CD8-positive, alpha-beta memory T cell (primary cell): ENCODE measurements at regions of chr19 and their contacts with region 1.

Region 1: GRCh38 chr19:4851551-4852290 is 15.7 kb downstream of the PLIN3 start:
- DNase-seq: peak; percentile 60 to 82 (median 68)
- H3K4me3 ChIP-seq: no peak overlapping the region
- H3K4me3 Mint-ChIP-seq: no peak overlapping the region
- H3K27ac ChIP-seq: no peak overlapping the region
- H3K27ac Mint-ChIP-seq: peak overlapping the region in 1 of 8 donors; percentile 19
- H3K4me1 ChIP-seq: no peaks in the 10 kb centered on the region
- H3K4me1 Mint-ChIP-seq: peaks cover 2 to 4% (median 3%) of the 10 kb centered on the region in 3 donors
- H3K27me3 ChIP-seq: no peaks in the 10 kb centered on the region
- H3K27me3 Mint-ChIP-seq: no peaks in the 10 kb centered on the region

Region 2: GRCh38 chr19:4732680-4733114 is 119.0 kb before region 1 on chr19:
- CTCF ChIA-PET with region 1: no interaction called
- POLR2A ChIA-PET with region 1: no interaction called
- DNase-seq: peak; percentile 26 to 72 (median 54)
- H3K4me3 ChIP-seq: peak overlapping the region; percentile 23
- H3K4me3 Mint-ChIP-seq: peak overlapping the region in 6 of 7 donors; percentile 4 to 54 (median 32)
- H3K27ac ChIP-seq: no peak overlapping the region
- H3K27ac Mint-ChIP-seq: peak overlapping the region in 5 of 8 donors; percentile 5 to 95 (median 24)
- H3K4me1 ChIP-seq: peaks cover 4% of the 10 kb centered on the region
- H3K4me1 Mint-ChIP-seq: peaks cover 4 to 7% (median 5%) of the 10 kb centered on the region in 3 donors
- H3K27me3 ChIP-seq: peaks cover 3% of the 10 kb centered on the region
- H3K27me3 Mint-ChIP-seq: peaks cover 6 to 10% of the 10 kb centered on the region in 2 donors

Region 3: GRCh38 chr19:4803736-4804695 is 47.7 kb before region 1 on chr19:
- CTCF ChIA-PET with region 1: interaction called, 205 read pairs
- POLR2A ChIA-PET with region 1: interaction called, 3 read pairs
- DNase-seq: peak; percentile 40 to 72 (median 53)
- H3K4me3 ChIP-seq: no peak overlapping the region
- H3K4me3 Mint-ChIP-seq: no peak overlapping the region
- H3K27ac ChIP-seq: no peak overlapping the region
- H3K27ac Mint-ChIP-seq: peak overlapping the region in 1 of 8 donors; percentile 21
- H3K4me1 ChIP-seq: no peaks in the 10 kb centered on the region
- H3K4me1 Mint-ChIP-seq: peaks cover 0 to 3% (median 0%) of the 10 kb centered on the region in 3 donors
- H3K27me3 ChIP-seq: no peaks in the 10 kb centered on the region
- H3K27me3 Mint-ChIP-seq: no peaks in the 10 kb centered on the region

Region 4: DNA sequence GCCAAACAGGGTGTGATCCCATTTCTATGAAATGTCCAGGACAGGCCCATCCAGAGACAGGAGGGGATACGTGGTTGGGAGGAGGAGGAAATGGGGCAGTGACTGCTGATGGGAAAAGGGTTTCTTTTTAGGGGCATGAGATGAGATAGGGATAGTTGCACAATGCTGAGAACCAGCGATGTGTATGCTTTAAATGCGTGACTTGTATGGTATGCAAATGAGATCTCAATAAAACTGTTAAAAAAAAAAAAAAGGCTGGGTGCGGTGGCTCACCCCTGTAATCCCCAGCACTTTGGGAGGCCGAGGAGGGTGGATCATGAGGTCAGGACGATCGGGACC is 10.4 kb before region 1 on chr19:
- CTCF ChIA-PET with region 1: interaction called, 15 read pairs
- POLR2A ChIA-PET with region 1: no interaction called
- DNase-seq: no peak
- H3K4me3 ChIP-seq: no peak overlapping the region
- H3K4me3 Mint-ChIP-seq: peak overlapping the region in 1 of 7 donors; percentile 16
- H3K27ac ChIP-seq: no peak overlapping the region
- H3K27ac Mint-ChIP-seq: peak overlapping the region in 5 of 8 donors; percentile 26 to 66 (median 64)
- H3K4me1 ChIP-seq: no peaks in the 10 kb centered on the region
- H3K4me1 Mint-ChIP-seq: peaks cover 7 to 12% (median 7%) of the 10 kb centered on the region in 3 donors
- H3K27me3 ChIP-seq: no peaks in the 10 kb centered on the region
- H3K27me3 Mint-ChIP-seq: no peaks in the 10 kb centered on the region

Region 5: DNA sequence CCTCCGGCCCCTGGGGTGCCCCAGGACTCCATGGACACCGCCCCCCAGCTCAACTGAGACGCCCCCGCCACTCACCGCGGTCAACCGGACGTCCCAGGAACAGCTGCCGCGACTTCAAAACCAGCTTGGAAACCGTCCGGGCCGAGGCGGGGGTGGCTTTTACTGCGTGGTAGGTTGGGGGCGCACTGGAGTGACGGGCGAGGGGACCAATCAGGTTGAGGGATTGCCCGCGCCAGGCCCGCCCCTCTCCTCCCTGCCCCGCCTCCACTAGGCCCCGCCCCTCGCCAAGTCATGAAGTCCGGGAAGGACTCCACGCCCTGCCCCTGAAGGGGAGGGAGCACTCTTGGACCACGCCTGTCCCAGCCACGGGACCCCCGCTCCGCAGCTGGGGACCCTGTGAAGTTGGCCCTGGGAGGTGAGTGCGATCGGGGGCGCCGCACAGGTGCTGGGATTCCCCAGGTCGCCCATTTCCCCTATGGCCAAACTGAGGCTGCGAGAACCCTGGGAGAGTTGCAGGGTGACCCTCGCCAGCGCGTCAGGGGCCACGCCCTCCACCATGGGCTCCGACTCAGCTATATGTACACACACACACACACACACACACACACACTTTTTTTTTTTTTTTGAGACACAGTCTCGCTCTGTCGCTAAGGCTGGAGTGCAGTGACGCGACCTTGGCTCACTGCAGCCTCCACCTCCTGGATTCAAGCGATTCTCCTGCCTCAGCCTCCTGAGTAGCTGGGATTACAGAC is 16.0 kb after region 1 on chr19 and contains the start of gene PLIN3:
- CTCF ChIA-PET with region 1: interaction called, 43 read pairs
- POLR2A ChIA-PET with region 1: no interaction called
- DNase-seq: peak; percentile 72 to 88 (median 84)
- H3K4me3 ChIP-seq: peak within 1 kb of the TSS; percentile 83
- H3K4me3 Mint-ChIP-seq: peak within 1 kb of the TSS; percentile 78 to 89 (median 82)
- H3K27ac ChIP-seq: peak within 1 kb of the TSS; percentile 71
- H3K27ac Mint-ChIP-seq: peak within 1 kb of the TSS; percentile 10 to 88 (median 66)
- H3K4me1 ChIP-seq: peaks cover 7% of the 10 kb centered on the region
- H3K4me1 Mint-ChIP-seq: peaks cover 10 to 18% (median 12%) of the 10 kb centered on the region in 3 donors
- H3K27me3 ChIP-seq: no peaks in the 10 kb centered on the region
- H3K27me3 Mint-ChIP-seq: no peaks in the 10 kb centered on the region
- total RNA-seq, gene PLIN3: 12.3 to 15.4 TPM

Region 6: GRCh38 chr19:4909897-4910593 is 58.3 kb after region 1 on chr19:
- CTCF ChIA-PET with region 1: interaction called, 12 read pairs
- POLR2A ChIA-PET with region 1: no interaction called
- DNase-seq: peak; percentile 90 to 95 (median 92)
- H3K4me3 ChIP-seq: peak overlapping the region; percentile 73
- H3K4me3 Mint-ChIP-seq: peak overlapping the region; percentile 88 to 100 (median 99)
- H3K27ac ChIP-seq: no peak overlapping the region
- H3K27ac Mint-ChIP-seq: peak overlapping the region in 7 of 8 donors; percentile 32 to 96 (median 84)
- H3K4me1 ChIP-seq: peaks cover 61% of the 10 kb centered on the region
- H3K4me1 Mint-ChIP-seq: peaks cover 52 to 77% (median 55%) of the 10 kb centered on the region in 3 donors
- H3K27me3 ChIP-seq: no peaks in the 10 kb centered on the region
- H3K27me3 Mint-ChIP-seq: peaks cover 0 to 4% of the 10 kb centered on the region in 2 donors

Region 7: GRCh38 chr19:4988770-4989251 is 137.1 kb after region 1 on chr19:
- CTCF ChIA-PET with region 1: no interaction called
- POLR2A ChIA-PET with region 1: no interaction called
- DNase-seq: no peak
- H3K4me3 ChIP-seq: no peak overlapping the region
- H3K4me3 Mint-ChIP-seq: no peak overlapping the region
- H3K27ac ChIP-seq: no peak overlapping the region
- H3K27ac Mint-ChIP-seq: peak overlapping the region in 4 of 8 donors; percentile 17 to 82 (median 70)
- H3K4me1 ChIP-seq: no peaks in the 10 kb centered on the region
- H3K4me1 Mint-ChIP-seq: peaks cover 28 to 52% (median 44%) of the 10 kb centered on the region in 3 donors
- H3K27me3 ChIP-seq: no peaks in the 10 kb centered on the region
- H3K27me3 Mint-ChIP-seq: no peaks in the 10 kb centered on the region

Region 8: DNA sequence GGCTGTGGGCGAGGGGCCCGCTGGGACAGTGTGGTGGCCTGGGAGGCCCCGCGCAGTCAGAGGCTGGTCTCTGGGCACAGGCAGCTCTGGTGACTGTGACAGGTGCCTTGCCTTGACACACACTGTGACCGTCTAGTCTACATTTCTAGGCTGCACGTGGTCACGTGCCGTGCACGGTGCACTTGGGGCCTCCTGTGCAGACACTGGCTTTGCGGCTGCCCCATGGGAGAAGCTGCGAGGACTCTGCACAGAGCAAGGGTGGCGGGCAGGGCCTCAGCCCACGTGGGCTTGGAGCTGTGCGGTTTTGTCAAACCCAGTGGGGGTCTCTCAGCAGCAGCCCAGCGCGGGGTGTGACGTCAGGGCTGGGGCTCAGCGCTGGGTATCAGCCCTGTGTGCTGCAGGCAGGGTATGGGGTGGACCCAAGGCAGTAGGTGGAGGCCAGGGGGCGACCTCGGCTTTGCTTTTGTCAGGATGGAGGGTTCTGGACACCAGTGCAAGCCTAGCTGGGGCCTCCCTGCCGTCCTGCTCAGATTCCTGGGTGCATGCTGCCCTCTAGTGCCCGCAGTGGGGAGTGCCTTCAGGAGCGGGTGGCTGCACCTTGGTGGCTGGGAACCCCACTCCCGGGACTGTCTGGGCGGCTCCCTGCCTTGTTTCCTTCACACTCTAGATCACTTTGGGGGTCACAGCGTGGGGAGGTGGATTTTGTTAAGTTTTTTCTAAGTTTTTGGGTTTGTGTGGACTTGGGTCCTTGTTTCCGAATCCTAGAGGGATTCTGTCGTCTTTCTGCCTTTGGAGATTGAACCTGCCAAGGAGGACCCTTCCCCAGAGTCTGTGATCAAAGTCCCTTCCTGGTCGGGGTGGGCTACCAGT is 179.7 kb after region 1 on chr19:
- CTCF ChIA-PET with region 1: interaction called, 19 read pairs
- POLR2A ChIA-PET with region 1: no interaction called
- DNase-seq: peak; percentile 64 to 83 (median 74)
- H3K4me3 ChIP-seq: no peak overlapping the region
- H3K4me3 Mint-ChIP-seq: no peak overlapping the region
- H3K27ac ChIP-seq: no peak overlapping the region
- H3K27ac Mint-ChIP-seq: peak overlapping the region in 2 of 8 donors; percentile 14 to 61
- H3K4me1 ChIP-seq: no peaks in the 10 kb centered on the region
- H3K4me1 Mint-ChIP-seq: peaks cover 9 to 21% (median 13%) of the 10 kb centered on the region in 3 donors
- H3K27me3 ChIP-seq: no peaks in the 10 kb centered on the region
- H3K27me3 Mint-ChIP-seq: no peaks in the 10 kb centered on the region